ENCODE measurements at regions of chr7 and their contacts with region 1.

Region 1: DNA sequence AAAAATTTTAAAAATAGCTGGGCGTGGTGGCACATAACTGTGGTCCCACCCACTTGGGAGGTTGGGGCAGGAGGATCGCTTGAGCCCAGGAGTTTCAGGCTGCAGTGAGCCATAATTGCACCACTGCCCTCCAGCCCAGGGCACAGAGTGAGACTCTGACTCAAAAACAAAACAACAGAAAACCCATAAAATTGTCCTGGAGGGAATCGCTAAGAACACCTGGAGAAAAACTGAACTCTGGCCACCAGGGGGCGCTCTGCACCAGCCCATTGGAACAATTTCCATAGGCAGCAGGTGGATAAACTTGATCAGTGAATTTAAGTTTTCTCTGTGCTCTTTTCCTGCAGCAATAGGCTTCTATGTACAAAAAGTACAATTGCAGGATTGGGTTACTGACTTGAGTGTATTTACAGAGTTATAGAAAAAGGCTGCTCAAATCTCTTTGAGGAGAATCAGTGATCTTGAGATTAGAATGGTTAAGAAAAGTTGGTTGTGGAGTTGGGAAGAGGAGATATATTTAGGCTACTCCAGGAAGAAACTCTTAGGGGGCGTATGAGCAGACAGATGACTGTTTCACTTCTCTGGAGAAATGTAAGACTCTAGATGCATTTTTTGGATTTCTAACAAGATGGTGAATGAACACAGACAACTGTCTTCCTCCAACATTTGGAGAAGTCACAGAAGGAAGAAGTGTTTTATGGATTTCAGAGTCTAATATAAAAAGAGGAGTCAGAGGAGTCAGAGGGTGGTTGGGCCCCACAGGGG is 274.9 kb upstream of the GALNT17 start:
- DNase-seq: peak; percentile 71
- H3K4me3 ChIP-seq: no peak overlapping the region
- H3K27ac ChIP-seq: no peak overlapping the region
- H3K4me1 ChIP-seq: no peaks in the 10 kb centered on the region
- H3K27me3 ChIP-seq: no peaks in the 10 kb centered on the region
- CTCF ChIP-seq: peak; percentile 90

Region 2: DNA sequence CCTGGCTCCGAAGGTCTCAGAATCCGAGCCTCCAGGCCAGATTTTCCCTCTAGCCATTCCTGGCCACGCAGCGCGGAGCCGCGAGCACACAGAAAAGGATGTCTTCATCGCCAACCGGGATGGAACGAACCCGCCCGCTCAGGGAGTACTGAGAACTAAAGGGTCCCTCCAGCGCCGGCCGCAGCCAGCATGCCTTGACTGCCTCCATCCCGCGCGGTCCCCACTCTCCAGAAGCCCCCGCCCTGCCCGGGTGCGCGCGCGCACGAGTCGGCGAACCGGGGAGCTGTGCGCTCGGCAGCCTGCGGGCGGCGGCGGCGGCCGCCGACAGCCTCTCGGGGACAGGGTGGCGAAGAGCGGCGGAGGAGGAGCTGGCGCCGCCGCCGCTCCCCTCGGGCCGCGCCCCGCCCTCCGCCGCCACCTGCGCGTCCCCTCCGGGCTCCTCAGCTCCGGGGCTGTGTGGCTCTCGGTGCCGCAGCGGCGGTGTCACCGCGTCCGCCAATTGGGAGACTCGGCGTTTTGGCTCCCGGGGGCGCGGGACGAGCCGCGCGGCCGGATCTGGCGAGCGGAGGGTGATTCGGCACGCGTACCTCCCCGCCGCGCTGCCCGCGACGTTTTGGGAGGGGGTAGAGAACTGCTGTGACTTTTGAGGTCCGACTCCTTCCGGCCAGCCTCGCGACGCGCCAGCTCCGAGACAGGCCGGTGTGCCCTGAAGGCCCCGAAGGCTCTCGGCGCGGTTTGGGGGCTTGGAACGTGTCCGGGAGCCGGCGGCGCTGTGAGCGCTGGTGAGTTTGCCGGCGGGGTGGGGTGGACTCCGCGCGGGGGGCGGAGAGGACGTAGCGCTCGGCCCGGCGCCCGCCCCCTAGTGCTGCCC is 274.4 kb after region 1 on chr7:
- intact Hi-C with region 1: no loop called
- DNase-seq: peak; percentile 20
- H3K4me3 ChIP-seq: peak overlapping the region; percentile 24
- H3K27ac ChIP-seq: no peak overlapping the region
- H3K4me1 ChIP-seq: no peaks in the 10 kb centered on the region
- H3K27me3 ChIP-seq: peaks cover 5% of the 10 kb centered on the region
- CTCF ChIP-seq: no peak

Region 3: DNA sequence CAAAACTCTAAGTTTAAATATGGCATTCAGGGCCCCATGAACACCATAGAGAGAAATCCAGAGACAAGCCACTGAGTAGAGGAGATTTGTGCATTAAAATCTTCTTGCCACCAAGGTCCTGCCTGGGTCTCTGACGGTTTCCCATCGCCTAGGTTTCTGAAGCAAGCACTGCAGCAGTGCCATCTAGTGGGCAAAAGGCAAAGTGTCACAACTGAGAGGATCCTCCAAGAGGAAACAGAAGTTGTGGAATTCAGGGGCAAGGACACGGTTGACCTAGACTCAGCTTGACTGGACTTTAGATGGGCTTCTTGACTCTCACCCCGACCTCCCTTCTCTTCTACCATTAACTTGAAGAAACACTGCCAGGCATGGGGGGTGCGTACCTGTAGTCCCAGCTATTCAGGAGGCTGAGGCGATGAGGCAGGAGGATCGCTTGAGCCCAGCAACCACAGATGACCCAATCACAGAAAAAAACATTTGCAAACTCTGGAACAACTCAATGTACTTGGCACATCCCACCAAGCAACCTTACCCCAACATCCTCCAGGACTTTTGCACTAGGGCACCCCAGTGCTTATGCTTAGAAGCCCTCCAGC is 879.0 kb after region 1 on chr7:
- intact Hi-C with region 1: loop called (anchors 2 kb)
- DNase-seq: peak; percentile 58
- H3K4me3 ChIP-seq: no peak overlapping the region
- H3K27ac ChIP-seq: no peak overlapping the region
- H3K4me1 ChIP-seq: no peaks in the 10 kb centered on the region
- H3K27me3 ChIP-seq: no peaks in the 10 kb centered on the region
- CTCF ChIP-seq: peak; percentile 63

Region 4: GRCh38 chr7:71942115-71942514 is 1085.1 kb after region 1 on chr7:
- intact Hi-C with region 1: no loop called
- DNase-seq: no peak
- H3K4me3 ChIP-seq: no peak overlapping the region
- H3K27ac ChIP-seq: no peak overlapping the region
- H3K4me1 ChIP-seq: no peaks in the 10 kb centered on the region
- H3K27me3 ChIP-seq: no peaks in the 10 kb centered on the region
- CTCF ChIP-seq: no peak